Motor neuron (in vitro differentiated cells): ENCODE measurements at regions of chr1 and their contacts with region 1.

Region 1: DNA sequence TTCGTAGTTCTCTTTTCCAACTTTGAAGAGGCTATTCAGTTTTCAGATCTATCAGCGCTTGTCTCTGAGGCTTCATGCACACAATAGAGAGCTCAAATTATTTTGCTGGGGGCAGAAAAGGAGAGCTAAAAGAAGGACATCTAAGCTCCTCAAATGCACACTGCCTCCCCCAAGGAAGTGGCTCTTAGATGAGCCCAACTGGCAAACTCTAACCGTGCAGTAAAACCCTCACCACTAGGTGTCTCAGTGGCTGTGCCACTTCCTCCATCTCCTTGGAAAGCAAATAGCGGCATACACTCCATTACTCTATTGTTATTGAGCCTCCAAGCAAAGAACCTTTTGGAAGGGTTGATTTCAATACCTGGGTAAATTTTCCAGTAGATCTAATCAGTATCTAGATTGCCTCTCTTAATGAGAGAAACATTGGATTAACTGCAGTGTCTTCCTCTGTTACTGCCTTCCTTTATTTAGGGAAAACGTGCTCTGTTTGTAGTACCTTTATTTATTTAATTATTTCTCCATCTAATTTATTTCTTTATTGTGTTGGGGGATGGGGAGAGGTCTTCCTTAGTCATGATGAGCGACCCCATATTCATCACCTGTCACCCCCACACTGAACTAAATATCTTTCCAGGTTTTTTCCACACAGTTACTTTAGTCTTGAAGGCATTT is 9.2 kb upstream of the SFPQ start:
- ATAC-seq: peak; percentile 92 to 100 (median 100)
- H3K4me3 ChIP-seq: peak overlapping the region in 1 of 5 donors; percentile 1
- H3K27ac ChIP-seq: peak overlapping the region in 1 of 2 donors; percentile 14
- H3K4me1 ChIP-seq: peaks cover 3 to 7% of the 10 kb centered on the region in 2 donors

Region 2: DNA sequence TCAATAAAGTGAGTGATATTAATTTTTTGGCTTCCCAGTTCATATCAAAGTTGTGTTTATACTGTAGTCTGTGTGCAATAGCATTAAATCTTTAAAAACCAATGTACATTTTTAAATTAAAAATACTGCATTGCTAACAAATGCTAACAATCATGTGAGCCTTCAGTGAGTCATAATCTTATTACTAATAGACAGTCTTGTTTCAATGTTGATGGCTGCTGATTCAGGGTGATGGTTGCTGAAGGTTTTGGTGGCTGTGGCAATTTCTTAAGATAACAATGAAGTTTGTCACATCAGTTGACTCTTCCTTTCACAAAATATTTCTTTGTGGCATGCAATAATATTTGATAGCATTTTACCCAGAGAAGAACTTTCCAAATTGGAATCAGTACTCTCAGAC is 175.4 kb after region 1 on chr1:
- in situ Hi-C with region 1: loop called in 1 of 9 experiments (anchors 25 kb)
- ATAC-seq: peak in 2 of 8 experiments; percentile 66 to 74
- H3K4me3 ChIP-seq: no peak overlapping the region
- H3K27ac ChIP-seq: no peak overlapping the region
- H3K4me1 ChIP-seq: no peaks in the 10 kb centered on the region